Adrenal gland (tissue), 19 donors: ENCODE measurements at regions of chr16 and their contacts with region 1.

Region 1: DNA sequence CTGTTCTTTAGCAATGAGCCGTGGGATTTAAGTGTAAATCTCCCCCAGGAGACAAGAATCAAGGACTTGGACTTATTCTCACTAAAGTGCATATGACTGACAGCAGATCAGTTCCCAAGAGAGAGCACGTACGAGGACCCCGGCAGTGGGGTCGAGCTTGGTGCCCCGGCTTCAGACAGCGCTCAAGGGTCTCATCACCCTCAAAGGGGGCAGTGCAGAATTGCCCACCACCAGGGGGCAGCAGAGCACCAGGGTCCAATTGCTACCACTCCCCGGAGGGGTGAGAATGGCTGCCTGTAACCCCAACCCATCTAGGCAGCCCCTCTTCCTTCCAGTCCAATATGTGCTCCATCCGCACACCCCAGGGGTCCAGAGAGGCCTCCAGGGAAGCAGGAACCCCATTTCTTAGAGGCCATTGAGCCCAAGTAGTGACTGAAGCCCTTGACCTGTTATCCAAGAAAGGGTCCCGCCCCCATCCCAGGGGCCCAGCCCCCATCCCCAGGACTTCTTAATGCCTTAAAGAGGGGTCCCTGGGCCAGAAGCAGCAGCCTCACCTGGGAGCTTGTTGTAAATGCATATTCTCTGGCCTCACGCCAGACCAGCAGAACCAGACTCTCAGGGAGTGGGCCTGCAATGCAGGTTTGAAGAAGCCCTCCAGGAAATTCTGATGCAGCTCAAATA is 86.1 kb downstream of the ZDHHC7 start:
- DNase-seq: peak; percentile 51 to 80 (median 75)
- H3K4me3 ChIP-seq: no peak overlapping the region
- H3K27ac ChIP-seq: peak overlapping the region in 2 of 5 donors; percentile 68 to 72
- H3K4me1 ChIP-seq: peaks cover 28 to 42% of the 10 kb centered on the region in 2 donors
- H3K27me3 ChIP-seq: no peaks in the 10 kb centered on the region
- CTCF ChIP-seq: peak; percentile 87 to 94 (median 91)
- POLR2A ChIP-seq: no peak

Region 2: DNA sequence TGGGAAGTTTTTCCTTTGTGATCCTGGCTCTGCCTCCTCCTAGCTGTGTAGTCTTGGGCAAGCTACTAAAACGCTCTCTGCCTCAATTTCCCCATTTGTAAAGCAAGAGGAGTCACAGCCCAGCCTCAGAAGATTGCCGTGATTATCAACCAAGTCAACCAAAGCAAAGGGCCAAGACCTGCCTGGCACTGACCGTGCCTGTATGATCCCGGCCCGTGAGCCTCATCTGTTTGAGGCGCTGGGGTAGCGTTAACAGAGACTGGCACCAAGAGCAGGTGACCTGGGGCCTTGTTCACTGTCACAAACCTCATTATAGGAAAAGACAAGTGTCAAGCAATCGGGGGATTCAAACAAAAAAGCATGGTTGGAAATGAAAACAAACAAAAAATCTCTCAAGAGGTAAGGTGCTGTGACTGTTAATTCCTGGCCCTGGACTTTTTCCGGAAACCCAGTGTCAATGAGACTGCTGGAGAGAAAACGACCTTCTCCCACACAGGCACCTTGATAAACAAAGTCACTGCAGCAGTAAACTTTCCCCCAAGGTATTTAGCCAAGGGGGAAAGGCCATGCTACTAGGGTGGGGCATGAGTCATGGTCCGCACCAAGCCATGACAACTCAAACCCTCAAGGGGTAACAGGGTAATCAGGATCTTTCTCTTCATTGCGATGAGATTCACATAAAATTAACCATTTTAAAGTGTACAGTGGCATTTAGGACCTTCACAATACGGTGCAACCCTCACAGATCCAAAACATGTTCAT is 426.2 kb before region 1 on chr16:
- intact Hi-C with region 1: no loop called
- DNase-seq: no peak
- H3K4me3 ChIP-seq: no peak overlapping the region
- H3K27ac ChIP-seq: no peak overlapping the region
- H3K4me1 ChIP-seq: peaks cover 0 to 7% of the 10 kb centered on the region in 2 donors
- H3K27me3 ChIP-seq: no peaks in the 10 kb centered on the region
- CTCF ChIP-seq: no peak
- POLR2A ChIP-seq: no peak

Region 3: DNA sequence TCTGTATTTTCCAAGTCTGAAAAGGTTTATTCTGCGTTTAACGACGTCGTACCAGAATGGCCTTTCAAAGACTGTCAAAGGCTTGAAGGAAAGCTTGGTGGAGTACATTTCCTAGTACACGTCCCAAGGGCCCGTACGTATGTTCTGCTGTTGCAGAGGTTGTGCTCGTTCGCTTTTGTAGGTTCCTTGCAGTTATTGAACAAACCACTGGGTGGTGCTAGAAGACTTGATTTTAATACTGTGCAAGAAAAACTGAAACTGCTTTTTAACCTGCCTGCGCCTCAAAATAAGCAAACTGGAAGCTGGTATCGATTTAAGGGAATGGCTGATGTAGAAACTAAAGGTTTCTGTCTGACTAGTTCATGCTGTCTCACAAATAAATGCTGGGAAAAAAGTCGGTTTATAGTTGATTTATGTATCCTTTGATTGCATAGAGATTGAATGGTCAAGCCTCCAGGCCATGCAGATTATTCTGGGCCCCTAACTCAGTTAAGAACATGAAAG is 170.8 kb before region 1 on chr16:
- intact Hi-C with region 1: loop called in 1 of 2 experiments (anchors 10 kb)
- DNase-seq: peak; percentile 69 to 91 (median 79)
- H3K4me3 ChIP-seq: no peak overlapping the region
- H3K27ac ChIP-seq: peak overlapping the region in 3 of 5 donors; percentile 10 to 48 (median 37)
- H3K4me1 ChIP-seq: peaks cover 14 to 52% of the 10 kb centered on the region in 2 donors
- H3K27me3 ChIP-seq: no peaks in the 10 kb centered on the region
- CTCF ChIP-seq: peak; percentile 70 to 94 (median 88)
- POLR2A ChIP-seq: no peak

Region 4: DNA sequence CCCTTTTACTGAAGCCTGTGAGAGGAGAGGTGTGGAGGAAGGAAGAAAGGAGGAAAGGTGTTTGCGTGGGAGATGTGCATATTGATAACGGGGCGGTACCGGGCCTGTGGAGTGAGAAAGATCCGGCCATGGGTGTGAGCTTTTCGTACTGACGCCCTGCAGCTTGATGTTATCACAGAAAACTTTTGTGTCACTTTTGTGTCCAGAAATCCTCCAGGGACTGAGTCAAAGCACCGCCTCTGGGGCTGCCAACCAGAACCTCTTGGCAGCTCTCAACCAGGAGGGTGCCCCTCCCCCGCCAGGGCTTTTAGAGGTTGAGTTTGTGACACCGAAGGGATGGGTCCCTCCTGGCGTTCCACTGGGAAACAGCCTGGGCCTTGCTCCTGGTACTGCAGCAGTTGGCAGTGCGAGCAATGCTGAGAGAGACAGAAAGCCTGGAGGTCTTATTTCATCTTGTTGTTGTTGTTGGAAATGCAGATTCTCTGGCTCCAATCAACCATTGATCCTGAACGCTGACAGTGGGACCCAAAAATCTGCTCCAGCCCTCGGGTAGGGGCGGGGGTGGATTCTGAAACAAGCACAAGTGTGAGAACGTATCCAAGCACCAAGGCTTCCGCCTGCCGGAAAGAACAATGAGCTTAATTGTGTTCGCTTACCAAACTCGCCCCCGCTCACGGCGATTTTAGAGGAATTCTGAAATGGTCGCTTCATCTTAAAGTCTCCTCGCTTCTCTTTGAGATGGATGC is 40.5 kb before region 1 on chr16:
- intact Hi-C with region 1: no loop called
- DNase-seq: peak in 2 of 7 donors; percentile 23 to 34
- H3K4me3 ChIP-seq: no peak overlapping the region
- H3K27ac ChIP-seq: peak overlapping the region in 1 of 5 donors; percentile 34
- H3K4me1 ChIP-seq: no peaks in the 10 kb centered on the region
- H3K27me3 ChIP-seq: no peaks in the 10 kb centered on the region
- CTCF ChIP-seq: no peak
- POLR2A ChIP-seq: no peak

Region 5: DNA sequence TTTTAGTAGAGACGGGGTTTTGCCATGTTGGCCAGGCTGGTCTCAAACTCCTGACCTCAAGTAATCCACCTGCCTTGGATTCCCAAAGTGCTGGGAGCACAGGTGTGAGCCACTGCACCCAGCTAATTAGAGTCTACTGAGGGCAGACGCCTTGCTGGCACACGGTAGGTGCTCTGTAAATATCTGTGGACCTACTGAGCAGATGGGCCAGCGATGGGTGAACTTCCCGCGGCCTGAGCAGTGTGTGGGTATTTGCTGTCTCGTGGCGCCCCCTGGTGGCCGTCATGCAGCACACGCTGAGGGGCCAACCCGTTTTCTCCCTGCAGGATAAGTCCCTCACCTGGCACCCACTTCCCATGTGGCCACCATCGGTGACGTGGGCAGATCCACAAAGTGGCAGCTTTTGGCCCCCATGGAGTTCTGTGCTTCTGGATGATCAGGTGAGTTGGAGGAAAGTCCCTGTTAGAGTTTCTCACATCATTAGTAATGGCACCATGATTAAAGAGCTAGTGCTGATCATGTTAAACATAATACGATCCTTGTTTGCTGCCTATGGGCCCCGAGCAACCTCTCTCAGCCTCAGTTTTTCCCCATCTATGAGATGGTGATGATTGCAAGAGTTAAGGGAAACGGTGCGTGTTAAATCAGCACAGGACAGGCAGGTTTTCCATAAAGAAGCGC is 45.4 kb after region 1 on chr16:
- intact Hi-C with region 1: loop called (anchors 2 to 5 kb)
- DNase-seq: peak; percentile 68 to 91 (median 80)
- H3K4me3 ChIP-seq: no peak overlapping the region
- H3K27ac ChIP-seq: no peak overlapping the region
- H3K4me1 ChIP-seq: peaks cover 0 to 10% of the 10 kb centered on the region in 2 donors
- H3K27me3 ChIP-seq: no peaks in the 10 kb centered on the region
- CTCF ChIP-seq: peak; percentile 94 to 98 (median 97)
- POLR2A ChIP-seq: no peak

Region 6: DNA sequence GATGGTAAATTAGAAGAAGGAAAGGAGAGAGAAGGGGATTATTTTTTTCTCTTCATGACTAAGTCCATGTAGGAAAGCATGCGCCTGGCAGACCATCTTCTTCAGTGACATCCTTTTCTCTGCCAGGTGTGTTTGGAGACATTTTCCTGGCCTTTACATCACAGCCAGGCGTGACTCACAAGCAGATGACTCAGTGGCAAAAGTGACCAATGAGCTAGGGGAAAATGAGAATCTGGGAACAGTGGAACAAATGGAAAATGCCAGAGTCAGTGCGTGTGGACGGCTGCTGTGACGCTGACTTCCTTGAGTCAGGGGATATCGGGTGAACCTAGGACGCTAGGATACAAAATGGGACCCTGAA is 111.8 kb after region 1 on chr16:
- intact Hi-C with region 1: no loop called
- DNase-seq: peak; percentile 76 to 91 (median 88)
- H3K4me3 ChIP-seq: no peak overlapping the region
- H3K27ac ChIP-seq: peak overlapping the region; percentile 22 to 93 (median 69)
- H3K4me1 ChIP-seq: peaks cover 11 to 24% of the 10 kb centered on the region in 2 donors
- H3K27me3 ChIP-seq: no peaks in the 10 kb centered on the region
- CTCF ChIP-seq: no peak
- POLR2A ChIP-seq: peak in 1 of 2 donors; percentile 42